PC-9 (cell line): ENCODE measurements at regions of chr2 and their contacts with region 1.

Region 1: GRCh38 chr2:65576861-65577601 is 144.6 kb upstream of the SPRED2 start:
- DNase-seq: peak; percentile 53 to 98
- H3K4me3 ChIP-seq: peak overlapping the region; percentile 21; the same call in 1 of the 2 replicates
- H3K27ac ChIP-seq: peak overlapping the region; percentile 90
- H3K4me1 ChIP-seq: peaks cover 32% of the 10 kb centered on the region
- H3K27me3 ChIP-seq: no peaks in the 10 kb centered on the region
- CTCF ChIP-seq: no peak

Region 2: GRCh38 chr2:64879745-64880144 is 697.3 kb before region 1 on chr2:
- CTCF ChIA-PET with region 1: no interaction called
- POLR2A ChIA-PET with region 1: no interaction called
- intact Hi-C with region 1: loop called (anchors 2 kb)
- DNase-seq: no peak
- H3K4me3 ChIP-seq: no peak overlapping the region
- H3K27ac ChIP-seq: no peak overlapping the region
- H3K4me1 ChIP-seq: peaks cover 26% of the 10 kb centered on the region
- H3K27me3 ChIP-seq: no peaks in the 10 kb centered on the region
- CTCF ChIP-seq: no peak

Region 3: GRCh38 chr2:65064728-65065552 is 512.1 kb before region 1 on chr2:
- CTCF ChIA-PET with region 1: no interaction called
- POLR2A ChIA-PET with region 1: interaction called, 3 read pairs
- intact Hi-C with region 1: loop called (anchors 1 kb)
- DNase-seq: peak in 1 of 2 experiments; percentile 22
- H3K4me3 ChIP-seq: no peak overlapping the region
- H3K27ac ChIP-seq: peak overlapping the region; percentile 2; the same call in 1 of the 2 replicates
- H3K4me1 ChIP-seq: peaks cover 17% of the 10 kb centered on the region
- H3K27me3 ChIP-seq: no peaks in the 10 kb centered on the region
- CTCF ChIP-seq: peak; percentile 66

Region 4: GRCh38 chr2:65554765-65555591 is 22.1 kb before region 1 on chr2:
- CTCF ChIA-PET with region 1: interaction called, 8 read pairs
- POLR2A ChIA-PET with region 1: no interaction called
- intact Hi-C with region 1: loop called (anchors 1 kb)
- DNase-seq: peak; percentile 69 to 85
- H3K4me3 ChIP-seq: no peak overlapping the region
- H3K27ac ChIP-seq: peak overlapping the region; percentile 31
- H3K4me1 ChIP-seq: peaks cover 25% of the 10 kb centered on the region
- H3K27me3 ChIP-seq: no peaks in the 10 kb centered on the region
- CTCF ChIP-seq: no peak

Region 5: DNA sequence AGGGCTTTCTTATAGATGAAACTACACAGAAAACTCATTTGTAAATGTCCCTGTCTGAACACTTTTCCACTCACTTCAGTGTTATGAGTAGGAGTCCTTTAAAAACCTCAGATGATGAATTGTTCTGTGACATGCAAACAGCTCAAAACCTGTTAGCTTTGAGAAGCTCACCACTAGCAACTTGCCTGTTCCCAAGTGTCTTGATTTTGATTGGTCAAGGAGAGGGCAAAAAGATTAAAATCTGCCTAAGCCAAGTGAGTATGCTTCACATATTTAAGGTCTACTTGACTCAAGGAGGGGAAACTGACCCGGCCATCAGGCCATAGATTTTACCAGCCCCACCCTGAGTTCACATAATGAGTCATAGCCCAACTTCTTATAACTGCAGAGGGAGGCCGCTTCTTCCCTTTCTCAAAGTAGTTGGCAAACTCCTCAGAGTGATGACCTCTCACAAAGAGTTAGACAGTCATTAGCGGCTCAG is 812.7 kb after region 1 on chr2:
- CTCF ChIA-PET with region 1: no interaction called
- POLR2A ChIA-PET with region 1: no interaction called
- intact Hi-C with region 1: no loop called
- DNase-seq: peak; percentile 5 to 64
- H3K4me3 ChIP-seq: no peak overlapping the region
- H3K27ac ChIP-seq: no peak overlapping the region
- H3K4me1 ChIP-seq: peaks cover 15% of the 10 kb centered on the region
- H3K27me3 ChIP-seq: no peaks in the 10 kb centered on the region
- CTCF ChIP-seq: no peak

Region 6: GRCh38 chr2:67290451-67291290 is 1713.6 kb after region 1 on chr2:
- CTCF ChIA-PET with region 1: no interaction called
- POLR2A ChIA-PET with region 1: no interaction called
- intact Hi-C with region 1: loop called (anchors 5 kb)
- DNase-seq: peak; percentile 74 to 99
- H3K4me3 ChIP-seq: peak overlapping the region; percentile 25; the same call in 1 of the 2 replicates
- H3K27ac ChIP-seq: peak overlapping the region; percentile 98
- H3K4me1 ChIP-seq: peaks cover 39% of the 10 kb centered on the region
- H3K27me3 ChIP-seq: no peaks in the 10 kb centered on the region
- CTCF ChIP-seq: no peak